Right cardiac atrium (tissue), 5 donors: ENCODE measurements at regions of chr9 and their contacts with region 1.

Region 1: DNA sequence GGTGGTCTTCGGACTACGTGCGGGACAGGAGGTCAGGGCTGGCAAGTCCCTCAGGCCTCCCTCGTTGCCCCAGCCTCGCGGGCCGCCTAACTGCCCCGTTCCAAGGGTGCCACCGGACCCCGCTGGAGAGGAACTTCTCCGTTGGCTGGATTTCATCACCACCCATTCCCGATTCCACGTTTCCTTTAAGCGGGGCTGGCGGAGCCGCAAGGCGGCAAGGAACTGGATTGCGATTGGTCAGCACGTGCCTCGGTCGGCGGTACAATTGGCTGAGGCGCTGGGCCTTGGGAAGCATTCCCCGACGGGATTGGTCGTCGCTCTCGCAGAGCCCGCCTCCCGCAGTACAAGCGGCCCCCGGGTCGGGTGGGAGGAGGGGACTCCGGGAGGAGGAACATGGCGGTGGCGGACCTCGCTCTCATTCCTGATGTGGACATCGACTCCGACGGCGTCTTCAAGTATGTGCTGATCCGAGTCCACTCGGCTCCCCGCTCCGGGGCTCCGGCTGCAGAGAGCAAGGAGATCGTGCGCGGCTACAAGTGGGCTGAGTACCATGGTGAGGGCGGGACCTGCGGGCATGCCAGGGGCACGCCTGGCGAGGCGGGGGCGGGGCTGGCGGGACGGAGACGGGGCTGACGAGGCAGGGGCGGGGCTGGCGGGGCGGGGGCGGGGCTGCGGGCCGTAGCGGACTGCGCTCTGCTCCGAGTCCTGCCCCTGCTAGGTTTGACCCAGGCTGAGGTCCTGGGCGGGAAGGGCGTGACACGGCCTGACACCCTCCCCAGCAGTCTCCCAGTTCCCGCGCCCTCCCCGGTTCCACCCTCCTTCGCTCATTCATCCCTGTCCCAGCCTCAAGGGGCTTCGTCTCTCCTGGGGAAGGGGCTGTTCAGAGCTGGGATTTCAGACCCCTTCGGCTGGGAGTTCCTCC is at the start of gene PHPT1:
- DNase-seq: peak; percentile 99 to 100 (median 99)
- ATAC-seq: peak; percentile 89
- H3K4me3 ChIP-seq: peak within 1 kb of the TSS; percentile 70
- H3K27ac ChIP-seq: peak within 1 kb of the TSS; percentile 93
- H3K4me1 ChIP-seq: peaks cover 2% of the 10 kb centered on the region
- H3K27me3 ChIP-seq: no peaks in the 10 kb centered on the region
- total RNA-seq, gene PHPT1: 176 to 227 (median 203) TPM

Region 2: GRCh38 chr9:136981588-136982231 is 132.4 kb after region 1 on chr9:
- intact Hi-C with region 1: loop called in 1 of 4 experiments (anchors 5 kb)
- DNase-seq: peak; percentile 76 to 88 (median 87)
- ATAC-seq: peak; percentile 12 to 44
- H3K4me3 ChIP-seq: no peak overlapping the region
- H3K27ac ChIP-seq: peak overlapping the region; percentile 81
- H3K4me1 ChIP-seq: no peaks in the 10 kb centered on the region
- H3K27me3 ChIP-seq: no peaks in the 10 kb centered on the region